ENCODE measurements at regions of chr19 and their contacts with region 1.

Region 1: DNA sequence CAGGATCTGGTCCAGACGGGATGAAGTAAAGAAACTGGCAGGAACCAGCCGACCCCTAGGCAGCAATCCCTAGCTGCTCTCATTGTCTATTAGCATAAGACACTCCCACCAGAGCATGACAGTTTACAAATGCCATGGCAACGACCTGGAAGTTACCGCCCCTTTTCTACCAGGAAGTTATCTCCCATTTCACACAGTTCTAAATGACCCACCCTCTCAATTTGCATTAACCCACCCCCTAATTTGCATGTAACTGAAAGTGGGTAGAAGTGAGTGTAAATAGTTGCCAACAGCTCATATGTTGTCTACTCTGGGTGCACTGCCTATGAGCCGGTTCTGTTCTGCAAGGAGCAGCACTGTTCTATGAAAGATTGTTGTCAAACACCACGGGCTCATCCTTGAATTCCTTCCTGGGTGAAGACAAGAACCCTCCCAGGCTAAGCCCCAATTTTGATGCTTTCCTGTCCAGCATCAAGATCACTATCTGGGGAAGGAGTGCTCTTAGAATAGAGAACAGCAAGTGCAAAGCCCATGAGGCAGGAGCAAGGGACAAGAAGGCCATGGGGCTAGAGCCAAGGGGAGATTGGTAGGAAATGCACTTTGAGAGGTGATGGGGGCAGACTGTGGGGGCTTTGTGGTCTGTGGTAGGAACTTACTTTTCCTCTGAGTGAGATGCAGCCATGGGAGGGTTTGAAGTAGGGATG is 13.9 kb upstream of the FBXO27 start:
- DNase-seq: peak in 1 of 2 experiments; percentile 87
- ATAC-seq: peak; percentile 87 to 93
- H3K4me3 ChIP-seq: no peak overlapping the region
- H3K27ac ChIP-seq: peak overlapping the region in 1 of 2 experiments; percentile 24; a peak in 3 of 6 replicates
- H3K4me1 ChIP-seq: peaks cover 5% of the 10 kb centered on the region; the same call in 1 of the 3 replicates
- CTCF ChIP-seq: no peak
- EP300 ChIP-seq: no peak
- POLR2A ChIP-seq: no peak
- RAD21 ChIP-seq: no peak

Region 2: GRCh38 chr19:38838573-38839269 is 207.5 kb before region 1 on chr19:
- CTCF ChIA-PET with region 1: no interaction called
- POLR2A ChIA-PET with region 1: no interaction called
- DNase-seq: peak in 1 of 2 experiments; percentile 62
- ATAC-seq: peak; percentile 6 to 8; a peak in 4 of 6 replicates
- H3K4me3 ChIP-seq: no peak overlapping the region
- H3K27ac ChIP-seq: peak overlapping the region; percentile 36 to 76; a peak in 4 of 6 replicates
- H3K4me1 ChIP-seq: peaks cover 92% of the 10 kb centered on the region
- CTCF ChIP-seq: no peak
- EP300 ChIP-seq: no peak
- POLR2A ChIP-seq: no peak
- RAD21 ChIP-seq: 0 out of 5 replicates have a peak, but pooled peaks of 1 of the 2 experiments have one; percentile 26

Region 3: GRCh38 chr19:38959618-38960017 is 86.7 kb before region 1 on chr19:
- CTCF ChIA-PET with region 1: interaction called, 46 read pairs
- POLR2A ChIA-PET with region 1: no interaction called
- DNase-seq: no peak
- ATAC-seq: no peak
- H3K4me3 ChIP-seq: no peak overlapping the region
- H3K27ac ChIP-seq: no peak overlapping the region
- H3K4me1 ChIP-seq: peaks cover 11% of the 10 kb centered on the region
- CTCF ChIP-seq: no peak
- EP300 ChIP-seq: no peak
- POLR2A ChIP-seq: no peak
- RAD21 ChIP-seq: no peak

Region 4: GRCh38 chr19:39070888-39071287 is 24.6 kb after region 1 on chr19:
- CTCF ChIA-PET with region 1: interaction called, 612 read pairs
- POLR2A ChIA-PET with region 1: interaction called, 12 read pairs
- DNase-seq: peak in 1 of 2 experiments; percentile 64
- ATAC-seq: peak; percentile 26 to 45; a peak in 4 of 6 replicates
- H3K4me3 ChIP-seq: no peak overlapping the region
- H3K27ac ChIP-seq: peak overlapping the region; percentile 60 to 72; a peak in 5 of 6 replicates
- H3K4me1 ChIP-seq: peaks cover 40% of the 10 kb centered on the region
- CTCF ChIP-seq: no peak
- EP300 ChIP-seq: peak in 1 of 2 experiments; percentile 48; a peak in 2 of 5 replicates
- POLR2A ChIP-seq: no peak
- RAD21 ChIP-seq: no peak

Measured in A549 (cell line).